ENCODE measurements at regions of chr9 and their contacts with region 1.

Region 1: DNA sequence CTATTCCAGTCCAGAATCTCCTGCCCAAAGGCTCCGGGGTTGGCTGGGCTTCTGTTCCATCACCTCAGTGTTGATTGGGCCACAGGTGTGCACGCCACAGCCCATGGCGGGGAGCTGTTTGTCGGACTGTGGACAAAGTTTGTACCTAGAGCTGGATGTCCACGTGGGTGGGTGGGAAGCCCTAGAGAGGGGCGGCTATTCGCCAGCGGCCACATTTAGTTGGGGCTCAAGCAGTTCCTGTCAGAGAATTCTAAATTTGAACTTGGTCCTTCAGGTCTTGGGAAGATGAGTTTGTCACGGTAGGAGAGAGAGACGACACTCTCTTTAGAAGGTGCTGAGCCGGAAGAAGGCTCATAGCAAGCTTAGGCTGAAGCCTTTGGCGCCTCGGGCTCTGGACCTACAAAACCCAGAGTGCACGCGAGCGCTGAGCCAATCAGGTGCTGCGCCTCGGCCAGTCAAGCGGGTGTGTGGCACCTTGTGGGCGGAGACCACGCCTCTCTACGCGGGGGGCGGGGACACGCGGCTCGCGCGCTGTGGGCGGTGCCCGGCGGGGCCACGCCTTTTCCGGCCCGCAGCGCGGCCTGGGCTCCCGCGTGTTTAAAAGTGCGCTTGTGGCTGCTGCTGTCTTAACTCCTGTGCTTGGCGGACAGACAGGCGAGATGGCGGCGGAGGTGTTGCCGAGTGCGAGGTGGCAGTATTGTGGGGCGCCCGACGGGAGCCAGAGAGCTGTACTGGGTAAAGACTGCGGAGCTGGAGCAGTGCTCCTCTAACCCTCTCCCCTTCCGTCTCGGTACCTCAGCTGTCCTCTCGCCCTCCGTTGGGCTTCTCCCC is at the start of gene POLR1E:
- DNase-seq: peak; percentile 92 to 97 (median 96)
- ATAC-seq: peak; percentile 94 to 98 (median 98)
- H3K4me3 ChIP-seq: peak within 1 kb of the TSS; percentile 36 to 84 (median 70)
- H3K27ac ChIP-seq: peak within 1 kb of the TSS in 11 of 12 donors; percentile 6 to 87 (median 78)
- H3K4me1 ChIP-seq: peaks cover 5 to 30% (median 26%) of the 10 kb centered on the region in 12 donors
- H3K27me3 ChIP-seq: peaks cover 0 to 10% (median 0%) of the 10 kb centered on the region in 9 donors
- CTCF ChIP-seq: no peak
- POLR2A ChIP-seq: peak in 1 of 2 donors; percentile 76
- total RNA-seq, gene POLR1E: 11.2 to 24.8 (median 12.8) TPM

Region 2: GRCh38 chr9:37415011-37415719 is 70.4 kb before region 1 on chr9:
- intact Hi-C with region 1: loop called in 2 of 10 experiments (anchors 5 kb)
- DNase-seq: peak in 4 of 5 donors; percentile 45 to 68 (median 60)
- ATAC-seq: peak; percentile 45 to 76 (median 66)
- H3K4me3 ChIP-seq: peak overlapping the region in 1 of 12 donors; percentile 12
- H3K27ac ChIP-seq: peak overlapping the region in 3 of 12 donors; percentile 25 to 37 (median 31)
- H3K4me1 ChIP-seq: peaks cover 0 to 21% (median 6%) of the 10 kb centered on the region in 12 donors
- H3K27me3 ChIP-seq: no peaks in the 10 kb centered on the region
- CTCF ChIP-seq: peak; percentile 72 to 88 (median 80)
- POLR2A ChIP-seq: no peak

Region 3: DNA sequence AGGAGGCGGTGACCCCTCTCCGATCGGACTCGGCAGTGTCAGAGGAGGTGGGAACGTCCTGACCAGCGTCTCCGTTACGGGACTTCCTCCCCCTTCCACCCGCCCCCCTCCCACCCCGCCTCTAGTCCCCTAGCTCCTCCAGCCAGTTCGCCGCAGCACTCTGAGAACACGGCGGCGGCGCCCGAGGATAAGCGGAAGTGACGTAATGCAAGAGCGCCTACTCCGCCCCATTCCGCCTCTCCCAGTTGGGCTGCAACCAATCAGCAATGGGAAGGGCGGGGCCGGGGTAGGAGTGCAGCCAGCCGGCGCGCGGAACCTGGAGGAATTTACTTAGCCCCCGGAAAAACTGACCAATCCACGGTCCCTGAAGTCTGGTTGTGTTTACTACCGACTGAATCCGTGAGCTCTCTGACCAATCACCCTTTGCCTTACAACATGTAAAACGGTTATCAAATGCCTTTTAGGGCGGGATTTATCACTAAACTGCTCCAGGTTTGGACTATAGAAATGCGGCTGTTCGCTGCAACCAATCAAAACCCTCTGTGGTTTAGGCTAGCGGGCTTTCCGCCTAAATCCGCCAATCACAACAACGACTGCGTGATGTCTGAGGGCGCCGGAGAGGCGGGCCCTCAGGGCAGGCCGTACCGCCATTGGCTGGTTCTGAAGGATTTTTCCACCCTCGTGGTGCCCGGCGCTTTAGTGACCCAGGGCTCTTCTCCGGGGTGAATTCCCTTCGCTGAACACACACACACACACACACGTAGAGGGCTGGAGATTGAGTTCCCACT is 20.2 kb before region 1 on chr9 and contains the start of gene ZBTB5:
- intact Hi-C with region 1: loop called in 3 of 10 experiments (anchors 1 to 2 kb)
- DNase-seq: peak; percentile 99 to 100 (median 99)
- ATAC-seq: peak; percentile 89 to 93 (median 92)
- H3K4me3 ChIP-seq: peak within 1 kb of the TSS; percentile 68 to 99 (median 92)
- H3K27ac ChIP-seq: peak within 1 kb of the TSS; percentile 86 to 99 (median 97)
- H3K4me1 ChIP-seq: peaks cover 0 to 40% (median 25%) of the 10 kb centered on the region in 12 donors
- H3K27me3 ChIP-seq: no peaks in the 10 kb centered on the region
- CTCF ChIP-seq: no peak
- POLR2A ChIP-seq: peak in 1 of 2 donors; percentile 92
- total RNA-seq, gene ZBTB5: 5.2 to 8.0 (median 6.3) TPM

Region 4: GRCh38 chr9:37550781-37551180 is 65.2 kb after region 1 on chr9:
- intact Hi-C with region 1: no loop called
- DNase-seq: no peak
- ATAC-seq: no peak
- H3K4me3 ChIP-seq: no peak overlapping the region
- H3K27ac ChIP-seq: no peak overlapping the region
- H3K4me1 ChIP-seq: no peaks in the 10 kb centered on the region
- H3K27me3 ChIP-seq: no peaks in the 10 kb centered on the region
- CTCF ChIP-seq: no peak
- POLR2A ChIP-seq: no peak

Region 5: GRCh38 chr9:37592108-37592951 is 106.7 kb after region 1 on chr9 and contains the start of gene TOMM5:
- intact Hi-C with region 1: loop called in 1 of 10 experiments (anchors 5 kb)
- DNase-seq: peak; percentile 93 to 95 (median 95)
- ATAC-seq: peak; percentile 99 to 100 (median 99)
- H3K4me3 ChIP-seq: peak within 1 kb of the TSS; percentile 61 to 98 (median 83)
- H3K27ac ChIP-seq: peak within 1 kb of the TSS in 11 of 12 donors; percentile 72 to 91 (median 84)
- H3K4me1 ChIP-seq: peaks cover 0 to 35% (median 16%) of the 10 kb centered on the region in 12 donors
- H3K27me3 ChIP-seq: peaks cover 0 to 6% (median 0%) of the 10 kb centered on the region in 9 donors
- CTCF ChIP-seq: peak in 2 of 12 donors; percentile 5 to 24
- POLR2A ChIP-seq: peak in 1 of 2 donors; percentile 70
- total RNA-seq, gene TOMM5: 39.7 to 64.2 (median 50.3) TPM

Region 6: DNA sequence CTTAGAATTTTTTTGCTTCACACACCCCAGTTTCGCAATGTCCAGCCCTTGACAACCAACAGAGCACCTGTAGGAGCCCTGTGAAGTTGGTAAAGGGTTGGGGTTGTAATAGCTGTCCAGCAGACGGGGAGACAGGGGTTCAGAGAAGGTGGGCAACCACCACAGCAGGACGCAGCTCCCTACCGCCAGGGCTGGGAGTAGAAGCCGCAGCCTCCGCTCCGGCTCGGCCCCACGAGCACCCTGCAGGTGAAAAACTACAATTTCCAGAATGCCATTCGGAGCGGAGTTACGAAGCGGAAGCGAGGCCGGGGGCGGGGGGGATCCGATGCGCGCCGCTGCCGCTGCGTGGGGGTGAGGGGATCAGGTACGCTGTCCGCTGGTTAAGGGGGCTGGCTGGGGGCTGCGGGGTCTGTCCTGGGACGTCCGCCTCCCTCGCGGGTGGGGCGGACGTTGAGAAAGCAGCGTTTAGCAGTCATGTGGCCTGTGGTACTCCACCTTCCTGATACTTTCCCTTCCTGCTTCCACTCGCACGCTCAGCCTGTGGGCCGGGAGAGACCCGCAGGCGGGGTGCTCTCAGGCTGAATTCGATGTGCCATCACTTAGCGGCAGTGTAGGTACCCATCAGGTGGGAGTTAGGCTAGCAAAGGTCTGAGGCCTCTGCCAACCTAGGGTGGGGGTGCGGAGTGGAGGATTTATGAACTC is 268.0 kb after region 1 on chr9 and contains the start of gene TRMT10B:
- intact Hi-C with region 1: loop called in 2 of 10 experiments (anchors 10 kb)
- DNase-seq: peak; percentile 67 to 80 (median 75)
- ATAC-seq: peak; percentile 84 to 97 (median 94)
- H3K4me3 ChIP-seq: peak within 1 kb of the TSS; percentile 69 to 95 (median 86)
- H3K27ac ChIP-seq: peak within 1 kb of the TSS; percentile 56 to 88 (median 80)
- H3K4me1 ChIP-seq: peaks cover 0 to 15% (median 7%) of the 10 kb centered on the region in 12 donors
- H3K27me3 ChIP-seq: no peaks in the 10 kb centered on the region
- CTCF ChIP-seq: no peak
- POLR2A ChIP-seq: no peak
- total RNA-seq, gene TRMT10B: 2.7 to 5.5 (median 3.5) TPM

Measured in heart left ventricle (tissue), 16 donors.